ENCODE measurements at regions of chr17 and their contacts with region 1.

Region 1: GRCh38 chr17:71037386-71037785 is 868.1 kb downstream of the KCNJ2 start:
- DNase-seq: no peak
- ATAC-seq: no peak
- H3K4me3 ChIP-seq: no peak overlapping the region
- H3K4me3 Mint-ChIP-seq: no peak overlapping the region
- H3K27ac ChIP-seq: no peak overlapping the region
- H3K27ac Mint-ChIP-seq: no peak overlapping the region
- H3K4me1 ChIP-seq: no peaks in the 10 kb centered on the region
- H3K4me1 Mint-ChIP-seq: no peaks in the 10 kb centered on the region
- H3K27me3 ChIP-seq: no peaks in the 10 kb centered on the region
- H3K27me3 Mint-ChIP-seq: no peaks in the 10 kb centered on the region
- CTCF ChIP-seq: no peak

Region 2: DNA sequence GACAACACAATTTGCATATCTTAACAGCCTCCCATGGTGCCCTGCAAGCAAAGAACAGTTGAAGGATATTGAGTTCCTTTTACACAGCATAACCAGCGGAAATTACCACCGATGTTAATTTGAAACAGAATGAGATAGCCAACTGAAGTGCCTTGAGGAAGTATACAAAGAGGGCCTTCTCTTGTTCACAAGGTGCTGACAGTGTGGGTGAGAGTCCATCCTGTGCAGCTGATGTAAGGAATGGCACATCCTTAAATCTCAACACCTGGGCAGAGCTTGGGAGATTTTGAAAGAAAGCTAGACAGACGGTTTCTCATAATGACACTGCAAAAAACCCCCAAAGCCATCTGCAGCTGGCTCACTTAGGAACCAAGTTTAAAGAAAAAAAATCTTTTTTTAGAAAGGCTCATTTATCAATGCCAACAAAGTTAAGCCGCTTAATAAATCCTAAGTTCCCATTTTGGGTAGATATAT is 49.5 kb before region 1 on chr17:
- CTCF ChIA-PET with region 1: no interaction called
- POLR2A ChIA-PET with region 1: no interaction called
- intact Hi-C with region 1: loop called in 1 of 2 experiments (anchors 5 kb)
- DNase-seq: no peak
- ATAC-seq: no peak
- H3K4me3 ChIP-seq: no peak overlapping the region
- H3K4me3 Mint-ChIP-seq: no peak overlapping the region
- H3K27ac ChIP-seq: no peak overlapping the region
- H3K27ac Mint-ChIP-seq: no peak overlapping the region
- H3K4me1 ChIP-seq: no peaks in the 10 kb centered on the region
- H3K4me1 Mint-ChIP-seq: no peaks in the 10 kb centered on the region
- H3K27me3 ChIP-seq: no peaks in the 10 kb centered on the region
- H3K27me3 Mint-ChIP-seq: no peaks in the 10 kb centered on the region
- CTCF ChIP-seq: no peak

Measured in CD8-positive, alpha-beta T cell (primary cell).